Prostate gland (tissue), 2 donors: ENCODE measurements at regions of chr2 and their contacts with region 1.

Region 1: DNA sequence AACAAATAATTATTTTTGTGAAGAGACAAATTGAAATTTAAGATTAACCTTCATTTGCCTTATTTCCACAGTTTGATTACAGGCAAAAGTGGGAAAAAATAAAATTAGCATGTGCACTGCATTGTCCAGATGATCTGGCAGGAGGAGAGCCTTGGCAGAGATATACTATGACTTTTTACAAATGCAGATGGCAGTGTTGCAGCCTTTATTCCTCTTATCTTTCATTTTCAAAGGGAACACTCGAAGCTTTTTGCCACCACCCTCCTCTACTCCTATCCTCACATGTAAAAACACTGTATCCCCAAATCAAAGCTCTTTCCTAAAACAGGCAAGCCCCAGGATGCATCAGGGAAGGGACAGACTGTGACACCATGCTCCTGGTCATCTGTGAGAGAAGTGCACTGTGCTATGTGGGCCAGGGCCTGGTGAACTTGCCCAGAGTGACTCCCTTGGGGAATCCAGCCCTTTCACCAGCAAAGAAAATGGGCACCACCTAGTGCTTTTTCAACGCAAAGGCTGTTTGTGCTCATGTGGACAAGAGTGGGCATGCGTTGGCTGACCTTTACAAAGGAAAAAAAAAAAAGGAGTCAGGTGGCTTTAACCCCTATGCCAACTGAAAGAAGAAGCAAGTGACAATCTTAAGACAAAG is 74.7 kb upstream of the ETAA1 start:
- DNase-seq: no peak
- H3K4me3 ChIP-seq: no peak overlapping the region
- H3K27ac ChIP-seq: no peak overlapping the region
- H3K4me1 ChIP-seq: no peaks in the 10 kb centered on the region
- H3K27me3 ChIP-seq: no peaks in the 10 kb centered on the region
- CTCF ChIP-seq: peak in 1 of 4 experiments; percentile 49
- POLR2A ChIP-seq: no peak

Region 2: DNA sequence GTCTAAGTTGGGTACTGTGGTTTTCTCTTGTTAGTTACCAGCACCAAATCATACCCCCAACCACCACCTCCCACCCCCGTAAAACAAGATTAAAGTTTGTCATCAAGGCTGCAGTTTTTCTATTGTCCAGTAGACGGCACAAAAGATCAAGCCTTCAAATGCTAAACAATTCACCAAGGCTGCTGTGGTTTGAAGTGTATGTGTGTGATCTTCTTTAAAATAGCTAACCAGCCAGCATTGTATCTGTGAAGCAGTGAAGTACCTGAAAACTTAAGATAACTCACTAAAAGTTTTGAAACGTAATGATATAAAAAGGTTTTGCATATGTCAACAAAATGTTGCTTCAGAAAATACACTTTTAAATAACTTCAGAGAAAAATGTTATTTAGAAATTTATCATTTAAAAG is 893.4 kb before region 1 on chr2:
- intact Hi-C with region 1: loop called (anchors 5 kb)
- DNase-seq: peak; percentile 39
- H3K4me3 ChIP-seq: no peak overlapping the region
- H3K27ac ChIP-seq: no peak overlapping the region
- H3K4me1 ChIP-seq: no peaks in the 10 kb centered on the region
- H3K27me3 ChIP-seq: peaks cover 20% of the 10 kb centered on the region
- CTCF ChIP-seq: peak; percentile 63 to 90 (median 70)
- POLR2A ChIP-seq: no peak

Region 3: DNA sequence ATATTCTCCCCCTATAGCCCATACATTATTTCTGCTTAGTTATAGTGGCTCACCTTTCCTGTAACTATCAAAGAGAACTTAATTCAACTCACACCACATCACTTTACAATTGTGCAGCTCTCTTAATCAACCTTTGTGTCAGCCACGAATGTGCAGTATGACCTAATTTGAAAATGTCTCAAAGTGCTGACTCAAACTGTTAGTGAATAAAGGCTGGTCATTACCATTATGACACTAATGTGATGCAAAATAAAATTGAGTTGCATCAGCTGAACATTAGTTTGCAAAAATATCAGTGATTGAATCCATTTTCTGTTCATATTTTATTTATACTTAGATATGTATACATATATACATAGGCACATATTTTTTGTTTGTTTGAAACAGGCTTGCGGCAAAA is 635.7 kb before region 1 on chr2:
- intact Hi-C with region 1: loop called (anchors 5 kb)
- DNase-seq: no peak
- H3K4me3 ChIP-seq: no peak overlapping the region
- H3K27ac ChIP-seq: peak overlapping the region; percentile 17 to 58
- H3K4me1 ChIP-seq: no peaks in the 10 kb centered on the region
- H3K27me3 ChIP-seq: no peaks in the 10 kb centered on the region
- CTCF ChIP-seq: no peak
- POLR2A ChIP-seq: no peak

Region 4: DNA sequence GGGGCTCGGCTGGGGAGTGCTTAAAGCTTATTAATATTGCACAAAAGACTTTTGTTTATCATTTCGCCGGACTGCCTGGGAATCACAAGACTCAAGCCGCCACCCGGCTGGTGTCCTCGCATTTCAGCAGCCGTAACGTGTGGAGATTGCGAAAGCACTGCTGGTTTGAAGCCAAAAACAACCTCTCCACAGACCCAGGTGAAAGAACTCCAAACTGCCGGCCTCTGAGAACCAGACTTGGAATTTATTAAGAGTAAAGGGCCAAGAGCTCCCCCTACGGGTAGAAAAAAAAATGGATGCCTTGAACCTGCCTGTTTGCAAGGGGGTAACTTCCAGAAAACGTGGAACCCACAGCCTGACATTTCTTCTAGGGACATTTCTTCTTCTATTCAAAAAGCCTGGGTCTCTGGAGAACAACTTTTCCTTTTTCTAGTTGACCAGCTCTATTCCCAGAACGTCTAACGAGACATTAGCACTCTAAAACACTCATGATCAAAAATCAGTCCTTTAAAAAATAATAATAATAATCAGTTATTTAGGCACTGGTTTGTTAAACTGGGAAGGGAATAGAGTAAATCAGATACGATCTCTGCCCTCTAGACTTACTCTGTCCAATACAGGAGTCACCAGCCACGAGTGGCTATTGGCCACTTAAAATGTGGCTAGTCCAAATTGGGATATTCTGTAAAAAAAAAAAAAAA is 524.0 kb after region 1 on chr2:
- intact Hi-C with region 1: loop called (anchors 5 kb)
- DNase-seq: peak; percentile 95
- H3K4me3 ChIP-seq: no peak overlapping the region
- H3K27ac ChIP-seq: peak overlapping the region; percentile 44 to 63
- H3K4me1 ChIP-seq: no peaks in the 10 kb centered on the region
- H3K27me3 ChIP-seq: no peaks in the 10 kb centered on the region
- CTCF ChIP-seq: peak; percentile 35 to 83 (median 72)
- POLR2A ChIP-seq: no peak

Region 5: DNA sequence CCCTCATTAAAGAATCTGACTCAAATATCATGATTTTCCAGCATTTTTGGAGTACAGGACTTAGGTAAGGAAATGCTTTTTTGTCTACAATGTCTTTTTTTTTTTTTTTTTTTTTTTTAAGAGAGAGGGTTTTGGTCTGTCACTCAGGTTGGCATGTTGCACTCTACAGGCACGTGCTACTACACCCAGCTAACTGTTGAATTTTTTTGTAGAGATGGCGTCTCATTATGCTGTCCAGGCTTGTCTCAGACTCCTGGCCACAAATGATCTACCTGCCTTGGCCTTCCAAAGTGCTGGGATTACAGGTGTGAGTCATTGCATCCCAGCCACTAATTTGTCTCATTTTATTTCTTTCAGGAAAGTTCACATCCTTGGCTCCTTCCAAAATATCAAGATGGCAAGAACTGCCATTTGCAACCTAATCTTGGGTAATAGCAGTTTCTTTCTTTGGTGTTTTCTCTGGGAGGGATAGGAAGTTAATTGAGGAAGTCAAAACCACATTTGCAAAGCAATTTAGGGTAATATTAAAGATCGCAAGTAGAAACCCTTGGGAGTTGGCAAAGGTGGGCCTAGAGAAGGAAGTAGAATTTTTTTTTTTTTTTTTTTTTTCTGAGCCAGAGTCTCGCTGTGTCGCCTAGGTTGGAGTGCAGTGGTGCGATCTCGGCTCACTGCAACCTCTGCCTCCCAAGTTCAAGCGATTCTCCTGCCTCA is 850.7 kb after region 1 on chr2:
- intact Hi-C with region 1: no loop called
- DNase-seq: no peak
- H3K4me3 ChIP-seq: no peak overlapping the region
- H3K27ac ChIP-seq: no peak overlapping the region
- H3K4me1 ChIP-seq: no peaks in the 10 kb centered on the region
- H3K27me3 ChIP-seq: no peaks in the 10 kb centered on the region
- CTCF ChIP-seq: no peak
- POLR2A ChIP-seq: no peak